Left colon (tissue), 2 donors: ENCODE measurements at regions of chrX and their contacts with region 1.

Region 1: GRCh38 chrX:72018277-72019112 is 107.8 kb downstream of the NHSL2 start:
- DNase-seq: peak; percentile 80 to 84
- ATAC-seq: peak; percentile 99

Region 2: GRCh38 chrX:72003811-72004750 is 14.4 kb before region 1 on chrX:
- intact Hi-C with region 1: no loop called
- DNase-seq: no peak
- ATAC-seq: peak; percentile 37

Region 3: GRCh38 chrX:72126539-72127140 is 108.1 kb after region 1 on chrX:
- intact Hi-C with region 1: loop called in 1 of 2 experiments (anchors 10 kb)
- DNase-seq: peak; percentile 71 to 86
- ATAC-seq: peak; percentile 88